Motor neuron (in vitro differentiated cells): ENCODE measurements at regions of chr22 and their contacts with region 1.

Region 1: DNA sequence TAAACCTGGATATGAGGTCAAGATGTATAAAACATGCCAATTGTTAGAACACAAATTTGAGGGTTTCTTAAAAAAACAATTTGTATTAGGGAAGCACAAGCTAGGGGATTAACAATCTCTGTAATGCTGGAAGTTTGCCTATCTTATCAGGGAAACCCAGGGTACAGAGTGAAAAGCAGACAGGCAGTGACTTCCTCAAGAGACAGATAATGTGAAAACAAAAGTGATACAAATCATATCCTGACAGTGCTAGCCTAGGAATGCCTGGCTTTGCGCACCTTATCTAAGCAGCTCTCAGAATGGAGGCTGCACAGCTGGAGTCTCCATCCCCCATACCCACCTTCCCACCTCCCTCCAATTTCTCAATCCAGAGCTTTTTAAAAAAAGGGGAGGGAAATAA is 22.5 kb upstream of the RBX1 start:
- ATAC-seq: no peak
- H3K4me3 ChIP-seq: no peak overlapping the region
- H3K27ac ChIP-seq: no peak overlapping the region
- H3K4me1 ChIP-seq: no peaks in the 10 kb centered on the region

Region 2: GRCh38 chr22:41106122-41106968 is 177.7 kb after region 1 on chr22:
- in situ Hi-C with region 1: loop called in 1 of 9 experiments (anchors 25 kb)
- ATAC-seq: no peak
- H3K4me3 ChIP-seq: no peak overlapping the region
- H3K27ac ChIP-seq: no peak overlapping the region
- H3K4me1 ChIP-seq: no peaks in the 10 kb centered on the region

Region 3: DNA sequence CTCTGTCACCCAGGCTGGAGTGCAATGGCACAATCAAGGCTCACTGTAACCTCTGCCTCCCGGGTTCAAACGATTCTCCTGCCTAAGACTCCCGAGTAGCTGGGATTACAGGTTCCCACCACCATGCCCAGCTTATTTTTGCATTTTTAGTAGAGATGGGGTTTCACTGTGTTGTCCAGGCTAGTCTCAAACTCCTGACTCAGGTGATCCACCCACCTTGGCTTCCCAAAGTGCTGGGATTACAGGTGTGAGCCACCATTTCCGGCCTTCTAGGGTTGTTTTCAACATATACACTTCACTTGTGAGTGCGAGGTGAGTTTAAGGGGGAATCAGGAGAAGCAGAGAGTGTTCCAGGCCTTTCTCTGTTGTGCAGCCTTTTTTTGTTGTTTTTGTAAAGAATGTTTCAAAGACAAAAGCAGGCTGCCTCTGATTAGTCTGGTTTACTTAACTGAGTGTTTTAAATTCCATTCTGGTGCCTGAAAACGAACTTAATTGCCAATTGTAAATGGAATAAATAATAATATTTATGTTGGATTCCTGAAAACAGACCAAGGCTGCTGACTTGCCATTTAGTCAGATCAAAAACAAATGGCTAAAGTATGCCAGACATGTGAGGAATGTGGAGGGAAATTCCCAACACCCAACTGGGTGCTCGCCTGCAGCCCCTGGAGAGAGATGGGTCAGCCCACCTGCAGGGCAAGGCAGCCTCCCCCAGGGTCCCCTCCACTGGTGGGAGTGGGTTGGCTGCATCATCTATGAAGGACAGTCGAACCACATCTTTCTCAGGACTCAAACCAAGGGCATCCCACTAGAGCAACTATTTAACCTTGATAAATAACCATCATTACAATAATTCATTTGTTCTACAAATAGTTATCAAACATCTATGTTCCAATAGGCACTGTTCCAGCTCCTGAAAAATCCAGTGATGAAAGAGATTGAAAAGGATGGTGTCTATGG is 361.9 kb after region 1 on chr22:
- in situ Hi-C with region 1: no loop called
- ATAC-seq: peak in 1 of 8 experiments; percentile 0
- H3K4me3 ChIP-seq: no peak overlapping the region
- H3K27ac ChIP-seq: no peak overlapping the region
- H3K4me1 ChIP-seq: peaks cover 0 to 5% of the 10 kb centered on the region in 2 donors